ENCODE measurements at regions of chr11 and their contacts with region 1.

Region 1: GRCh38 chr11:18012863-18013781 is at the start of gene SERGEF:
- DNase-seq: peak; percentile 92
- ATAC-seq: peak; percentile 90
- H3K4me3 ChIP-seq: peak within 1 kb of the TSS; percentile 85
- H3K27ac ChIP-seq: no peak within 1 kb of the TSS
- H3K4me1 ChIP-seq: peaks cover 15% of the 10 kb centered on the region; the same call in 1 of the 2 replicates
- H3K27me3 ChIP-seq: no peaks in the 10 kb centered on the region
- CTCF ChIP-seq: no peak
- total RNA-seq, gene SERGEF: 13.7 and 14.0 TPM in 2 replicates

Region 2: DNA sequence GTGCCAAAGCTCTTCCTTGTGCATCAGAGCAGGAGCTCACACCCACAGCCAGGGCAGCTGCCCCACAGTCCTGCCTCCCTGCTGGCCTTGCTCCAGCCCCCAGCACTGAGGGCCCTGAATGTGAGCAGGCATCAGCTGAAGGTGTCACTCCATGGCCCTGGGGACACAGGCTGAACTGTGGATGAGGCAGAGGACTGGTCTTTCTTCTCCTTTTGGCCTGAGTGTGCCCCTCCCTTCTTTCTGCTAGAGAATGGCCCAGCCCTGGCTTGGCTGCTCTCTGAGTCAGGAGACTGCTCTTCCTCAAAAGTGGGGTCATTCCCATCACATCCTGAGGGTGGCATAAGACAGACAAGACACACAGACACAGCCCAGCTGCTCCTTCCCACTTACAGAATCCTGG is 449.9 kb before region 1 on chr11:
- CTCF ChIA-PET with region 1: no interaction called
- POLR2A ChIA-PET with region 1: no interaction called
- intact Hi-C with region 1: no loop called
- DNase-seq: peak; percentile 21
- ATAC-seq: peak; percentile 31; the same call in 1 of the 2 replicates
- H3K4me3 ChIP-seq: no peak overlapping the region
- H3K27ac ChIP-seq: no peak overlapping the region
- H3K4me1 ChIP-seq: no peaks in the 10 kb centered on the region
- H3K27me3 ChIP-seq: peaks cover 17% of the 10 kb centered on the region; the same call in 1 of the 2 replicates
- CTCF ChIP-seq: peak; percentile 13; the same call in 1 of the 2 replicates

Region 3: GRCh38 chr11:18105802-18106574 is 92.9 kb after region 1 on chr11 and contains the start of gene SAAL1:
- CTCF ChIA-PET with region 1: no interaction called
- POLR2A ChIA-PET with region 1: no interaction called
- intact Hi-C with region 1: loop called (anchors 5 kb)
- DNase-seq: peak; percentile 77
- ATAC-seq: peak; percentile 93
- H3K4me3 ChIP-seq: peak within 1 kb of the TSS; percentile 93
- H3K27ac ChIP-seq: peak within 1 kb of the TSS; percentile 6; the same call in 1 of the 2 replicates
- H3K4me1 ChIP-seq: peaks cover 21% of the 10 kb centered on the region
- H3K27me3 ChIP-seq: no peaks in the 10 kb centered on the region
- CTCF ChIP-seq: peak; percentile 81
- total RNA-seq, gene SAAL1: 21.5 and 25.4 TPM in 2 replicates